AG04449 (cell line): ENCODE measurements at regions of chr19 and their contacts with region 1.

Region 1: DNA sequence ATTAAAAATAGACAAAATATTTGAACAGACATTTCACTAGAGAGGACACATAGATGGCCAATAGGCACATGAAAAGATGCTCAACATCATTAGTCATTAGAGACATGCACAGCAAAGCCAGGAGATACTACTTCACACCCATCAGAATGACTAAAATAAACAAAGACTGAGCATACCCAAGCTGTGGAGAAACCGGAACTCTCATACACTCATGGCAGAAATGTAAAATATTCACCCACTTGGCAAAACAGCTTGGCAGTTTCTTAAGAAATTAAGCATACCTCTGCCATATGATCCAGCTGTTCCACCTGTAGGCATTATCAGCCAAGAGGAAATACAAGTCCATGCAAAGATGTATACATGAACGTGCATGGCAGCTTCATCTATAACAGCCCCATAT is 213.4 kb downstream of the TSHZ3 start:
- DNase-seq: no peak
- H3K4me3 ChIP-seq: no peak overlapping the region
- CTCF ChIP-seq: no peak

Region 2: DNA sequence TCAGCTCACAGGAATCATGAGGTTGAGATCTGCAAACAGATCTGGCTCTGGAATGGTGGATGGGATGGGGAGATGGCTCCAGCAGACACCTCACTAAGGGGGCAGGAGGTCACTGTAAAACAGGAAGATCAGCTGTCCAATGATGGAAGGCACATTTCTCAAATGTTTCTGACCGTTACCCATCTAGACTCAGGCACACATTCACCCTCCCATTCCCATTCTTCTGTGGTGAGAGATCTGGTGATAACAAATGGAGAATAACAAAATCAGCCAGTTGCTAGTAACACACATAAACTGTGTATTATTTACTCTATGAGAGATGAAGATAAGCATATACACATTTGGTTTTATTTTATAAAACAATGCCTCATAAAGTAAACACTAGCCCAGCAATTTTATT is 22.5 kb before region 1 on chr19:
- CTCF ChIA-PET with region 1: no interaction called
- POLR2A ChIA-PET with region 1: no interaction called
- DNase-seq: no peak
- H3K4me3 ChIP-seq: no peak overlapping the region
- CTCF ChIP-seq: no peak

Region 3: GRCh38 chr19:31125071-31125470 is 10.8 kb before region 1 on chr19:
- CTCF ChIA-PET with region 1: interaction called, 11 read pairs
- POLR2A ChIA-PET with region 1: interaction called, 8 read pairs
- DNase-seq: no peak
- H3K4me3 ChIP-seq: no peak overlapping the region
- CTCF ChIP-seq: no peak

Region 4: DNA sequence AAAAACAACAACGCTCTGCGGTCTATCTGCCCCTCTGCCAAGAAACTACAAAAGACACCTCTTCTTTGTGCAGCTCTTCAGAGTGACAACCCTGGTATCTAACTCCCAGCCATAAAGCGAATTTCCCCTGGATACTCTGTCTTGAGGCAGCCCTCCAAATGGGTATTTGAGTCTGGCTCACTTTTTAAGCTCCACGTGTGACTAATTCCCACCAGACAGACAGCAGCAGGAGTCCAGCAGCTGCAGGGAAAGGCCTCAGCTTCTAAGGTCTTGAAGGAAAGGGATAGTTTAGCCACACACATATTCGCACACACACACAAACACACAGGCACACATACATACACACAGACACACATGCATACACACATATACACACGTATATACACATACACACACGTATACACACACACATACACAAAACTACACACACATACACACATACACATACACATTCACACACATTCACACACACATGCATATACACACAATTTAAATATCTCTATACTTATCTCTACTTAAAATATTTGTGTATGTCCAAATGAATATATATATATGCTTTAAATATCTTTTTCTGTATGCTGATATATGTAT is 24.6 kb after region 1 on chr19:
- CTCF ChIA-PET with region 1: no interaction called
- POLR2A ChIA-PET with region 1: no interaction called
- DNase-seq: no peak
- H3K4me3 ChIP-seq: no peak overlapping the region
- CTCF ChIP-seq: no peak

Region 5: DNA sequence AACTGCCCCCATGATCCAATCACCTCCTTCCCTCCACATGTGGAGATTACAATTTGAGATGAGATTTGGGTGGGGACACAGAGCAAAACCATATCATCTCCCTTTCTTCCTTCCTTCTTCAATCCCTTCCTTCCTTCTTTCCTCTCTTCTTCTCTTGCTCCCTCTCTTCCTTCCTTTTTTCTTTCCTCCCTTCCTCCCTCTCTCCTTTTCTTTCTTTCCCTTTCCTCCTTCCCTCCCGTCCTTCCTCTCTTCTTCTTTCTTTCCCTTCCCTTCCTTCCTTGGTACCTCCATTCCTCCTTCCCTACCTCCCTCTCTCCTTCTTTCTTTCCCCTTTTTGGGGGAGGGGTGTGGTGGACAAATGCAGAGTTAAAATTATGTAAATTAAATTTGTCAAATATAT is 68.3 kb after region 1 on chr19:
- CTCF ChIA-PET with region 1: no interaction called
- POLR2A ChIA-PET with region 1: no interaction called
- DNase-seq: no peak
- H3K4me3 ChIP-seq: no peak overlapping the region
- CTCF ChIP-seq: no peak